Posterior vena cava (tissue), 2 donors: ENCODE measurements at regions of chr20 and their contacts with region 1.

Region 1: DNA sequence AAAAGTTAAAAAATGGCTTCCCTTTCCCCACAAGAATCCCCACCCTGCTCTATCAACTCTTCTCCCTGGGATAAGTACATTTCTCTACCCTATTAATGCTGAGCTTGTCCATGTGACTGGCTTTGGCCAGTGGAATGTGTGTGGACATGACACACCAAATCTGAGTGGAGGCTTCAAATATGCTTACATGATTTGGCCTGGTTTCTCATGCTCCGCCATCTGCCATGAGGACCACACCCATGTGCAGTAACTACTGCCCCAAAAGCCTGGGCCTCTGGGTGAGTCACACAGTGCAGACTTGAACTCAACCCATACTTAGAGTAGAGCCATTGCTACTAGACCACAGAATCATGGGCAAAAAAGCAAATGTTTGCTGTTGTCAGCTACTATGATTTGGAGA is 65.4 kb downstream of the PRND start:
- DNase-seq: peak; percentile 89

Region 2: DNA sequence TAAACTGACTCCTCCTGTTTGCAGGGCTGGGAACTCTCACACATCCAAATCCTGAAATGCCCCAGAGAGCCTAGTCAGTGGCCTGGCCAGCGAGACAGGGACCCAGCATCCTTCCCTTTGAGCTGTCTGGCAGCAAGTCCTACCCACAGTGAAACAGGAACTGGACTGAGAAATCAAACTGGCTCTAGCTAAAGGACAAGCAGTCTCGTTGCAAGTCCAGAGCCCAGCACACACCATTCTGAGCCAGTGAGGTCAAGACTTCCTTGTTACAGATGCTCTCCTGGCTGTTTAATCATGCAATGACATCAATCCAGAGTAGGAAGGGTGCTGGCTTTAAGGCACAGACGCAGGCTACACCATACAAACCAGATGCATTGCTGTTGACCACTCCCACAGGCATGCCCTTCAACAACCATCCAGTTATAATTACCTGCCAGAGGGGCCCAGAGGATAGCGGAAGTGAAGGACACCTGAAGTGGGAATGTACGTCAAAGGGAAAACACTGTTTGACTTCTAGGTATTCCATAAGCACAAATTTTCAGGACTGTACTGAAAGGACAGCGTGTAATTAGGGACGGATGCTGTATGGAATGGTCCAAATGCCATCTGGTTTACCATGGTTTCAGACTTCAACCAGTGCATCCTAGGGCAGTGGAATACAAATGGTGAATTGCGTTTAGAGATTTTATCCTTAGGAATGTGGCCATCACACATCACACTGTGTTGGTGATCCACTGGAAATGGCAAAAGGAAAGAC is 99.9 kb after region 1 on chr20:
- intact Hi-C with region 1: loop called in 1 of 2 experiments (anchors 10 kb)
- DNase-seq: peak; percentile 85

Region 3: GRCh38 chr20:5046656-5047339 is 259.7 kb after region 1 on chr20:
- intact Hi-C with region 1: no loop called
- DNase-seq: no peak